Heart right ventricle (tissue), 16 donors: ENCODE measurements at regions of chr22 and their contacts with region 1.

Region 1: GRCh38 chr22:28043266-28043665 is 124.2 kb upstream of the PITPNB start:
- DNase-seq: no peak
- ATAC-seq: peak in 5 of 8 donors; percentile 30 to 59 (median 44)
- H3K4me3 ChIP-seq: no peak overlapping the region
- H3K27ac ChIP-seq: peak overlapping the region in 1 of 10 donors; percentile 0
- H3K4me1 ChIP-seq: peaks cover 0 to 23% (median 6%) of the 10 kb centered on the region in 9 donors
- H3K27me3 ChIP-seq: no peaks in the 10 kb centered on the region
- CTCF ChIP-seq: no peak

Region 2: DNA sequence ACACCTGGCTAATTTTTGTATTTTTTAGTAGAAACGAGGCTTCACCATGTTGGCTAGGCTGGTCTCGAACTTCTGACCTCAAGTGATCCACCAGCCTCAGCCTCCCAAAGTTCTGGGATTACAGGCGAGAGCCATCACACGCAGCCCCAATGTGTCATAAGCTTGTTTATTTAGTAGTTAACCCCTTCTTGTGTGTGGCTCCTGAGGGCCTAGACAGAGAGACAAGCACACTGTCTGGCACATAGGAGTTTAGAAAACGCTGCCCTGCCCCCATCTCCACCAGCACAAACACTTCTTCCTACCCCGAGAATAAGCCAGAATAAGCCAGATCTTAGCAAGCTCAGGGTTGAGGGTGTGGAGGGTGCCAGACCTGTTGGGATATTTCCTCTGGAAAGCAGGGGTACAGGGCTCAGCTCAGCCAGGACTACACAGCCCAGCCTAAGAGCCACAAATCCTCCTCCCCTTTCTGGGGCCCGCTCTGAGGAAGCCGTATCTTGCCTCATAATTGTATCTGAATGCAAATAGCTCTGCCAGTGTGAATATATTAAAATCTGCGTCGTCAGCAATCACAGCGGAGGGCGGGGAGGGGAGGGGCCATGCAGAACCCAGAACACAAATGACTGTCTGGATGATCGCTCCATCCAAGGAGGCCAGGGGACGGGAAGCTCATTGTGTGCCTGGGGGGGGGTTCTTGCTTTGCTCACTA is 489.0 kb before region 1 on chr22:
- intact Hi-C with region 1: no loop called
- DNase-seq: no peak
- ATAC-seq: peak in 3 of 8 donors; percentile 7 to 40 (median 17)
- H3K4me3 ChIP-seq: no peak overlapping the region
- H3K27ac ChIP-seq: no peak overlapping the region
- H3K4me1 ChIP-seq: no peaks in the 10 kb centered on the region
- H3K27me3 ChIP-seq: peaks cover 0 to 11% (median 0%) of the 10 kb centered on the region in 7 donors
- CTCF ChIP-seq: no peak

Region 3: GRCh38 chr22:28207281-28208030 is 164.2 kb after region 1 on chr22:
- intact Hi-C with region 1: loop called in 1 of 10 experiments (anchors 10 kb)
- DNase-seq: no peak
- ATAC-seq: no peak
- H3K4me3 ChIP-seq: no peak overlapping the region
- H3K27ac ChIP-seq: no peak overlapping the region
- H3K4me1 ChIP-seq: peaks cover 0 to 23% (median 12%) of the 10 kb centered on the region in 9 donors
- H3K27me3 ChIP-seq: no peaks in the 10 kb centered on the region
- CTCF ChIP-seq: no peak

Region 4: GRCh38 chr22:28351476-28351875 is 308.2 kb after region 1 on chr22:
- intact Hi-C with region 1: loop called in 1 of 10 experiments (anchors 10 kb)
- DNase-seq: no peak
- ATAC-seq: no peak
- H3K4me3 ChIP-seq: no peak overlapping the region
- H3K27ac ChIP-seq: no peak overlapping the region
- H3K4me1 ChIP-seq: peaks cover 0 to 31% (median 17%) of the 10 kb centered on the region in 9 donors
- H3K27me3 ChIP-seq: no peaks in the 10 kb centered on the region
- CTCF ChIP-seq: no peak